ENCODE measurements at regions of chr20 and their contacts with region 1.

Region 1: GRCh38 chr20:5001174-5002076 is at the start of gene SLC23A2:
- DNase-seq: peak; percentile 73
- ATAC-seq: peak; percentile 77
- H3K4me3 ChIP-seq: peak within 1 kb of the TSS; percentile 51 to 81 (median 71)
- H3K4me3 Mint-ChIP-seq: peak within 1 kb of the TSS; percentile 97
- H3K27ac ChIP-seq: peak within 1 kb of the TSS; percentile 43 to 71
- H3K27ac Mint-ChIP-seq: peak within 1 kb of the TSS; percentile 97
- H3K4me1 ChIP-seq: peaks cover 28 to 39% of the 10 kb centered on the region in 2 donors
- H3K4me1 Mint-ChIP-seq: peaks cover 37% of the 10 kb centered on the region
- H3K27me3 ChIP-seq: no peaks in the 10 kb centered on the region
- H3K27me3 Mint-ChIP-seq: no peaks in the 10 kb centered on the region
- CTCF ChIP-seq: no peak
- total RNA-seq, gene SLC23A2: 70.7 and 75.2 TPM in 2 replicates

Region 2: GRCh38 chr20:4973330-4974097 is 27.9 kb before region 1 on chr20:
- CTCF ChIA-PET with region 1: interaction called, 5 read pairs
- POLR2A ChIA-PET with region 1: interaction called, 5 read pairs
- intact Hi-C with region 1: loop called (anchors 1 kb)
- DNase-seq: peak; percentile 66
- ATAC-seq: peak; percentile 83
- H3K4me3 ChIP-seq: peak overlapping the region in 4 of 5 experiments; percentile 16 to 58 (median 40)
- H3K4me3 Mint-ChIP-seq: peak overlapping the region; percentile 87
- H3K27ac ChIP-seq: peak overlapping the region; percentile 36 to 40
- H3K27ac Mint-ChIP-seq: peak overlapping the region; percentile 84
- H3K4me1 ChIP-seq: peaks cover 21 to 30% of the 10 kb centered on the region in 2 donors
- H3K4me1 Mint-ChIP-seq: peaks cover 46% of the 10 kb centered on the region
- H3K27me3 ChIP-seq: no peaks in the 10 kb centered on the region
- H3K27me3 Mint-ChIP-seq: no peaks in the 10 kb centered on the region
- CTCF ChIP-seq: no peak

Region 3: GRCh38 chr20:5046656-5047339 is 45.4 kb after region 1 on chr20:
- CTCF ChIA-PET with region 1: no interaction called
- POLR2A ChIA-PET with region 1: no interaction called
- intact Hi-C with region 1: loop called (anchors 5 kb)
- DNase-seq: peak; percentile 60
- ATAC-seq: peak; percentile 95
- H3K4me3 ChIP-seq: no peak overlapping the region
- H3K4me3 Mint-ChIP-seq: peak overlapping the region; percentile 0
- H3K27ac ChIP-seq: no peak overlapping the region
- H3K27ac Mint-ChIP-seq: peak overlapping the region; percentile 78
- H3K4me1 ChIP-seq: peaks cover 7 to 9% of the 10 kb centered on the region in 2 donors
- H3K4me1 Mint-ChIP-seq: peaks cover 30% of the 10 kb centered on the region
- H3K27me3 ChIP-seq: no peaks in the 10 kb centered on the region
- H3K27me3 Mint-ChIP-seq: no peaks in the 10 kb centered on the region
- CTCF ChIP-seq: no peak

Region 4: DNA sequence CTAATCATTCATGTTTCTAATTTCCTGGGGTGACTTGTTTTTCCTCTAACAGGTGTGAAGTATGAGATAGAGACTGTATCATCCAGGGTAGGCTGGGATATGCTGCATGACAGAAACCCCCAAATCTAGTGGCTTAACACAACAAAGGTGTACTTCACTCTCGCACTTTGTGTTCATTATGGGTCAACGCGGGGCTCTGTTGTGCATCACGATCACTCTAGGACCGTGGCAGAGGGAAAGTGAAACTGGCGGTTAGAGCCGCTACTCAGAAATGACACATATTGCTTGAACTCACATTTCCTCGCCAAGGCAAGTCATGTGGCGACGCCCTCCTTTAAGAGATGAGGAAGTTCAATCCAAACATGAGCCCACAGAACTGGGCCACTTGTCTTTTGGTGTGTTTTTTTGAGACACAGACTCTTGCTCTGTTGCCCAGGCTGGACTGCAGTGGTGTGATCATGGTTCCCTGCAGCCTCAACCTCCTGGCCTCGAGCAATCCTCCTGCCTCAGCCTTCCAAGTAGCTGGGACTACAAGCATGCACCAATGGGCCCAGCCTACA is 77.1 kb after region 1 on chr20:
- CTCF ChIA-PET with region 1: interaction called, 8 read pairs
- POLR2A ChIA-PET with region 1: no interaction called
- intact Hi-C with region 1: loop called (anchors 2 kb)
- DNase-seq: peak; percentile 91
- ATAC-seq: peak; percentile 96
- H3K4me3 ChIP-seq: peak overlapping the region; percentile 23 to 68 (median 50)
- H3K4me3 Mint-ChIP-seq: peak overlapping the region; percentile 85
- H3K27ac ChIP-seq: peak overlapping the region; percentile 85 to 93
- H3K27ac Mint-ChIP-seq: peak overlapping the region; percentile 94
- H3K4me1 ChIP-seq: peaks cover 37 to 50% of the 10 kb centered on the region in 2 donors
- H3K4me1 Mint-ChIP-seq: peaks cover 51% of the 10 kb centered on the region
- H3K27me3 ChIP-seq: no peaks in the 10 kb centered on the region
- H3K27me3 Mint-ChIP-seq: no peaks in the 10 kb centered on the region
- CTCF ChIP-seq: no peak